Ovary (tissue), 10 donors: ENCODE measurements at regions of chr1 and their contacts with region 1.

Region 1: DNA sequence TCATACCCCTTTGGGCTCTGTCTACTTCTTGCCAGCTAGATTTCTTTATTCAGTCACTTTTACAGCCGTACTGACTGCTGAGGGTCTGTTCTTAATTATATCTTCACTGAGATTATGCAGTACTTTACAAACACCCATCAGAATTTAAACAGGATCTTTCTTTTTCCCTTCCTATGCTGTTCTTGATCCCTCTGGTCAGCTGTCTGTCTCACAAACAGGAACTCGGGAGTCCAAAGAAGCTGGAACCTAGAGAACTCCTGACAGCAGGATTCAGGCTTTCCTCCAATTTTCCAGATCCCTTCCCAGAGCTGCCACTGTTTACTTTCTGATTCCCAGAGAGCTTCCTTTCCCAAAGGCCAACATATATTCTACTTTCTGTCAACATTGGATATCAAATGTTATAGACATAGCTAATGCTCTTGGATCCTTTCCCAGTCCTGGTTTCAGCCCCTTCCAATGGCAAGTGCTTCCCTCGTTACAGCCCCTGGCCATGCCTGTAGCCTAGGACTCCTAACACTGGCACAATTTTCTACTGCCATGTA is 59.5 kb downstream of the ATP2B4 start:
- DNase-seq: no peak
- H3K4me3 ChIP-seq: no peak overlapping the region
- H3K27ac ChIP-seq: peak overlapping the region in 1 of 2 donors; percentile 5
- H3K4me1 ChIP-seq: peaks cover 7% of the 10 kb centered on the region
- H3K27me3 ChIP-seq: no peaks in the 10 kb centered on the region
- CTCF ChIP-seq: no peak
- EP300 ChIP-seq: no peak
- POLR2A ChIP-seq: no peak

Region 2: GRCh38 chr1:202915146-202915545 is 771.0 kb before region 1 on chr1:
- intact Hi-C with region 1: no loop called
- DNase-seq: no peak
- H3K4me3 ChIP-seq: no peak overlapping the region
- H3K27ac ChIP-seq: no peak overlapping the region
- H3K4me1 ChIP-seq: no peaks in the 10 kb centered on the region
- H3K27me3 ChIP-seq: no peaks in the 10 kb centered on the region
- CTCF ChIP-seq: no peak
- EP300 ChIP-seq: no peak
- POLR2A ChIP-seq: no peak

Region 3: GRCh38 chr1:203346060-203346768 is 339.9 kb before region 1 on chr1:
- intact Hi-C with region 1: loop called in 2 of 4 experiments (anchors 5 to 10 kb)
- DNase-seq: peak in 1 of 5 donors; percentile 20
- H3K4me3 ChIP-seq: no peak overlapping the region
- H3K27ac ChIP-seq: no peak overlapping the region
- H3K4me1 ChIP-seq: peaks cover 6% of the 10 kb centered on the region
- H3K27me3 ChIP-seq: no peaks in the 10 kb centered on the region
- CTCF ChIP-seq: no peak
- EP300 ChIP-seq: no peak
- POLR2A ChIP-seq: no peak

Region 4: GRCh38 chr1:203839059-203839458 is 152.9 kb after region 1 on chr1:
- intact Hi-C with region 1: no loop called
- DNase-seq: no peak
- H3K4me3 ChIP-seq: no peak overlapping the region
- H3K27ac ChIP-seq: no peak overlapping the region
- H3K4me1 ChIP-seq: peaks cover 1% of the 10 kb centered on the region
- H3K27me3 ChIP-seq: no peaks in the 10 kb centered on the region
- CTCF ChIP-seq: no peak
- EP300 ChIP-seq: no peak
- POLR2A ChIP-seq: no peak